ENCODE measurements at regions of chr5 and their contacts with region 1.

Region 1: DNA sequence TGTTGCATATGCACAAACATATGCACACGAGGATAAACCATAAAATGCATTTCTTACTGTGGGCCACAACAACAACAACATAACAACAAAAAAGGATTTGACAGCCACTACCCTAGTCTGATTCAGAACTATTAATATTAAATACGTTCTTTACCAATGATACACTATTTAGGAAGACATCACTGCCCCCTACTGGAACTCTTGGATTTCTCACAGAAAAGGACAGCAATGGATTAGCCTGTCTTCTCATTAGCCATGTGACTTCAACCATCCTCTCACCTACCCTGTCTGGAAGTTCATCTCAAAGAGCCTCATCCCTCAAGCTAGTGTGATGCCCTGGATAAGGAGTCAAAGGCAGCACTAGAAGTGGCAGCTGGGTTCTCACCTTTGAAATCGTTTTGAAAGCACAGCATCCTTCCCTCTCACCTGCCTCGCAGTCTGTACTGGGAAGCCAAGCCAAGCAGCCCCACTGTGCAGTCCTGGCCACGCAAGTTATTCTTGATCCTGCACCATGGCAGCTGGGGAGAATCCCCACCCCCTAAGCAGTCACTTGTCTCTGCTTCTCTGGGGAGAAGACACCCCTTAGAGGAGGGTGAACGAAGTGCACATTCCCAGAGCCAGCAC is 64.6 kb downstream of the SH3TC2 start:
- DNase-seq: peak; percentile 37
- H3K4me3 Mint-ChIP-seq: no peak overlapping the region
- H3K27ac Mint-ChIP-seq: no peak overlapping the region
- H3K4me1 Mint-ChIP-seq: no peaks in the 10 kb centered on the region
- H3K27me3 Mint-ChIP-seq: peaks cover 28% of the 10 kb centered on the region

Region 2: GRCh38 chr5:148740966-148741742 is 257.1 kb before region 1 on chr5:
- CTCF ChIA-PET with region 1: interaction called, 13 read pairs
- intact Hi-C with region 1: loop called (anchors 1 kb)
- DNase-seq: no peak
- H3K4me3 Mint-ChIP-seq: no peak overlapping the region
- H3K27ac Mint-ChIP-seq: no peak overlapping the region
- H3K4me1 Mint-ChIP-seq: no peaks in the 10 kb centered on the region
- H3K27me3 Mint-ChIP-seq: peaks cover 28% of the 10 kb centered on the region

Region 3: DNA sequence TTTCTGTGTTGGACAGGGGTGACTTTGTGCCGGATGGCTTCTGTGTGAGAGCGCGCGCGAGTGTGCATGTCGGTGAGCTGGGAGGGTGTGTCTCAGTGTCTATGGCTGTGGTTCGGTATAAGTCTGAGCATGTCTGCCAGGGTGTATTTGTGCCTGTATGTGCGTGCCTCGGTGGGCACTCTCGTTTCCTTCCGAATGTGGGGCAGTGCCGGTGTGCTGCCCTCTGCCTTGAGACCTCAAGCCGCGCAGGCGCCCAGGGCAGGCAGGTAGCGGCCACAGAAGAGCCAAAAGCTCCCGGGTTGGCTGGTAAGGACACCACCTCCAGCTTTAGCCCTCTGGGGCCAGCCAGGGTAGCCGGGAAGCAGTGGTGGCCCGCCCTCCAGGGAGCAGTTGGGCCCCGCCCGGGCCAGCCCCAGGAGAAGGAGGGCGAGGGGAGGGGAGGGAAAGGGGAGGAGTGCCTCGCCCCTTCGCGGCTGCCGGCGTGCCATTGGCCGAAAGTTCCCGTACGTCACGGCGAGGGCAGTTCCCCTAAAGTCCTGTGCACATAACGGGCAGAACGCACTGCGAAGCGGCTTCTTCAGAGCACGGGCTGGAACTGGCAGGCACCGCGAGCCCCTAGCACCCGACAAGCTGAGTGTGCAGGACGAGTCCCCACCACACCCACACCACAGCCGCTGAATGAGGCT is 172.1 kb before region 1 on chr5 and contains the start of gene ADRB2:
- CTCF ChIA-PET with region 1: interaction called, 4 read pairs
- intact Hi-C with region 1: loop called (anchors 5 kb)
- DNase-seq: peak; percentile 90
- H3K4me3 Mint-ChIP-seq: peak within 1 kb of the TSS; percentile 78
- H3K27ac Mint-ChIP-seq: peak within 1 kb of the TSS; percentile 10
- H3K4me1 Mint-ChIP-seq: peaks cover 15% of the 10 kb centered on the region
- H3K27me3 Mint-ChIP-seq: peaks cover 23% of the 10 kb centered on the region
- total RNA-seq, gene ADRB2: 0.21 to 0.32 TPM

Region 4: DNA sequence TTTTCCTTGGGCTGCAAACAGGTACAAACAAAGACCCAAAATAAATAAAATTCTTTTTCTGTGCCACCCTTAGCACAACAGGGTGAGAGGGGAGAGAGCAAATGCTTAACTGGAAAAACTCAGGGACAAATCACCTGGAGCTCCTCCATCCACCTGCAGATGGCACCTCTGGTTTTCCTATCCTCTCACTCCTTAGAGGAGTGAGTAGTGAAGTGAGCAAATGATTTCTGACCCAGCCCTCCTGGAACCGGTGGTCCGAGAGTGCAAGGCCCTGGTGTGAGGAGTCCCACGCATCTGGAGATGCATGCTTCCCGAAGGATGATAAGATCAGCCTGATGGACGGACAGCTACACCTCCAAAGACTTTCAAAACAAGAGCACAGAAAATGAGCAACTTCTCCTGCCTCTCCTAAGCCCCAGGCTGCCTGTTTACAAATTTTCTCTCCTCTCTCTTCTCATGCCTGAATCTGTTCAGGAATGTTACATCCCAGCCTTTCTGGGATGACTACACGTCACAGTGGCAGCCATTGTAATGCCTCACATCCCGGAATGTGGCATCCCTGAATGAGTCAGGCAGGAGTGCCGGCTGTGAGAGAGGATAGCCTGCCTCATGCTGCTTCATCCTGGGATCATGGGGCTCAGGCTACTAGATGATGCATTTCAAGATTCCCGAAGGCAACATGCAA is 85.4 kb before region 1 on chr5:
- CTCF ChIA-PET with region 1: no interaction called
- intact Hi-C with region 1: loop called (anchors 5 kb)
- DNase-seq: no peak
- H3K4me3 Mint-ChIP-seq: no peak overlapping the region
- H3K27ac Mint-ChIP-seq: no peak overlapping the region
- H3K4me1 Mint-ChIP-seq: no peaks in the 10 kb centered on the region
- H3K27me3 Mint-ChIP-seq: peaks cover 10% of the 10 kb centered on the region

Measured in activated naive CD4-positive, alpha-beta T cell treated with anti-CD3 and anti-CD28 coated beads for 36 hours (primary cell).